ENCODE measurements at regions of chr19 and their contacts with region 1.

Region 1: DNA sequence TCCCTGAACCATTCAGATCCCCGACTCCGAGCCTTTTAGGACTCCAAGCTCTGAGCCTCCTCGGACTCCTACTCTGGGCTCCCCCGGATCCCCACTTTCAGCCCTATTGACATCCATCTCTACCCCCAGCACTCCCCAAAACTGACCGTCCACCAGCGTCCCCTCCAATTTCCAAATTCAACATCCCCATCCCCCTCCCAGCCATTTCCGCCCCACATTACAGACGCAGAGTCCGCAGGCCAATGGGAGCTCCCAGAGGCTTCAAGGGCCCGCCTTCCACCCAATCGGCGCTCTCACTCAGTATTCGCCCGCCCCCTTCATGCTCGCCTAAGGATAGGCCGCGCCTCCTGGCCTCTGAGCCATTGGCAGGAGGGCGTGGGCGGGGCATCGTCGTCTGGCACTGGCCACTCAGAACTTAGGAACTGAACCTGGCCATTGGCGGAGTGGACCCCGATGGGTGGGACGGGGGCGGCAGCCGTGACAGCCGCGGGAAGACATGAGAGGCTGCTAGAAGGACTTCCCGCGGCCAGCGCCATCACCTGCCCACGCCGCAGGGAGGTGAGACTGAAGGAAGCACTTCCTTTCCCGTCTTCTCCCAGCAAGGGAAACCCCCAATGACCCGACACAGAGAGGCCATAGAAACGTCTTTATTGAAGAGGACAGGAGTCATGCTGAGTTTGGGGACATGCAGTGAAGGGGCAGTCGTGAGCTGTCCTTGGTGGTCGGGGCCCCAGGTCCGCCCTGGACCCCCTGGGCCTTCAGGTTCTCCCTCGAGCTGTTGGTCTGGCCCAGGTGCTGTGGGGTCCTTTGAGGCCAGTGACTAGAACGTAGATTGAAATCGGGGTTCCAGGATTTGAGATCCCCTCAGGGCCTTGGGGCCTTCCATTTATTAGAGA is at the start of gene ALKBH6:
- DNase-seq: peak; percentile 100
- ATAC-seq: peak; percentile 88 to 98
- H3K4me3 ChIP-seq: peak within 1 kb of the TSS; percentile 65
- H3K27ac ChIP-seq: peak within 1 kb of the TSS; percentile 81 to 85
- H3K4me1 ChIP-seq: peaks cover 19% of the 10 kb centered on the region
- CTCF ChIP-seq: no peak
- EP300 ChIP-seq: no peak
- POLR2A ChIP-seq: peak; percentile 80
- RAD21 ChIP-seq: 0 out of 5 replicates have a peak, but pooled peaks of 1 of the 2 experiments have one; percentile 23
- polyA plus RNA-seq, gene ALKBH6: 27.5 and 34.2 TPM in 2 replicates

Region 2: GRCh38 chr19:35995048-35995993 is 19.0 kb before region 1 on chr19 and contains the start of gene SDHAF1:
- CTCF ChIA-PET with region 1: interaction called, 15 read pairs
- POLR2A ChIA-PET with region 1: interaction called, 11 read pairs
- DNase-seq: peak; percentile 98 to 100
- ATAC-seq: peak; percentile 90 to 93
- H3K4me3 ChIP-seq: peak within 1 kb of the TSS; percentile 79
- H3K27ac ChIP-seq: peak within 1 kb of the TSS; percentile 88 to 90
- H3K4me1 ChIP-seq: peaks cover 26% of the 10 kb centered on the region
- CTCF ChIP-seq: 0 out of 3 replicates have a peak, but pooled peaks have one; percentile 8
- EP300 ChIP-seq: no peak
- POLR2A ChIP-seq: no peak; the same call in none of the 2 replicates
- RAD21 ChIP-seq: peak in 1 of 2 experiments; percentile 16; a peak in 2 of 5 replicates
- polyA plus RNA-seq, gene SDHAF1: 22.8 and 25.3 TPM in 2 replicates

Region 3: GRCh38 chr19:36032251-36033104 is 18.2 kb after region 1 on chr19 and contains the start of gene CLIP3:
- CTCF ChIA-PET with region 1: interaction called, 17 read pairs
- POLR2A ChIA-PET with region 1: interaction called, 6 read pairs
- DNase-seq: no peak
- ATAC-seq: no peak
- H3K4me3 ChIP-seq: no peak within 1 kb of the TSS
- H3K27ac ChIP-seq: no peak within 1 kb of the TSS
- H3K4me1 ChIP-seq: no peaks in the 10 kb centered on the region
- CTCF ChIP-seq: no peak
- EP300 ChIP-seq: no peak
- POLR2A ChIP-seq: no peak
- RAD21 ChIP-seq: no peak
- polyA plus RNA-seq, gene CLIP3: 1.1 and 1.4 TPM in 2 replicates

Region 4: DNA sequence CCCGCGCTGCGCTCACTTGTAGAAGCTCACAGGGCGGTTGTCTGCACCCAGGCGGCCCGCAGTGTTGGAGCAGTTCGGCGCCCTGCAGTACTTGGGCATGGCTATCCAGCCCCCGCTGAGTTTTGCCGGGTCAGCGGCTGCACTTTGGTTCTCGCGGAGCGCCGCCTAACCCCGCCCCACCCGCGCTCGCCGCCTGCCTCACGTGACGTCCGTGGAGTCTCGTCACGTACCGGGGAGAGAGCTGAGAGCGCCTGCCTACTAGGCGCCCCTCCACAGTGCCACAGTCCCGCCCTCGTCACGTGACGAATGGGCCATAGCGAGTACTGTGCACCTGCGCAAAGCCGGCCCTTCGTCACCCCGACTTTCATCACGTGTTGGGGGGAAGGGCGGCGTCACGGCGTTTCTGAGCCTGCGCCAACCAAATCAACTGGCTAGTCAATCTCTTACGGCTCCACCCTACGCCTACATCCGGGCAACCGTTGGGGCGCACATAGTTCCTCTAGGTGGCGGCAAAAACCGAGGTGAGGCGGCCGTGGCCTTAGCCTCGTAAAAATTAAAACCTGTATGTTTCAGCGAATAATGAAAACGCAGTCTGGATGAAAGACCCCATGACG is 39.9 kb after region 1 on chr19 and contains the start of gene THAP8:
- CTCF ChIA-PET with region 1: interaction called, 5 read pairs
- POLR2A ChIA-PET with region 1: interaction called, 18 read pairs
- DNase-seq: peak; percentile 100
- ATAC-seq: peak; percentile 82 to 88
- H3K4me3 ChIP-seq: peak within 1 kb of the TSS; percentile 84
- H3K27ac ChIP-seq: peak within 1 kb of the TSS; percentile 89 to 93
- H3K4me1 ChIP-seq: peaks cover 22% of the 10 kb centered on the region
- CTCF ChIP-seq: peak; percentile 54
- EP300 ChIP-seq: no peak; a peak in 1 of 5 replicates
- POLR2A ChIP-seq: peak; percentile 93
- RAD21 ChIP-seq: peak in 1 of 2 experiments; percentile 17; a peak in 2 of 5 replicates
- polyA plus RNA-seq, gene THAP8: 3.1 and 3.2 TPM in 2 replicates